Activated naive CD4-positive, alpha-beta T cell treated with anti-CD3 and anti-CD28 coated beads, Interleukin-2, amount 10 ng/mL, durations not matched to agents 7 days and 5 days (primary cell): ENCODE measurements at regions of chr14 and their contacts with region 1.

Region 1: DNA sequence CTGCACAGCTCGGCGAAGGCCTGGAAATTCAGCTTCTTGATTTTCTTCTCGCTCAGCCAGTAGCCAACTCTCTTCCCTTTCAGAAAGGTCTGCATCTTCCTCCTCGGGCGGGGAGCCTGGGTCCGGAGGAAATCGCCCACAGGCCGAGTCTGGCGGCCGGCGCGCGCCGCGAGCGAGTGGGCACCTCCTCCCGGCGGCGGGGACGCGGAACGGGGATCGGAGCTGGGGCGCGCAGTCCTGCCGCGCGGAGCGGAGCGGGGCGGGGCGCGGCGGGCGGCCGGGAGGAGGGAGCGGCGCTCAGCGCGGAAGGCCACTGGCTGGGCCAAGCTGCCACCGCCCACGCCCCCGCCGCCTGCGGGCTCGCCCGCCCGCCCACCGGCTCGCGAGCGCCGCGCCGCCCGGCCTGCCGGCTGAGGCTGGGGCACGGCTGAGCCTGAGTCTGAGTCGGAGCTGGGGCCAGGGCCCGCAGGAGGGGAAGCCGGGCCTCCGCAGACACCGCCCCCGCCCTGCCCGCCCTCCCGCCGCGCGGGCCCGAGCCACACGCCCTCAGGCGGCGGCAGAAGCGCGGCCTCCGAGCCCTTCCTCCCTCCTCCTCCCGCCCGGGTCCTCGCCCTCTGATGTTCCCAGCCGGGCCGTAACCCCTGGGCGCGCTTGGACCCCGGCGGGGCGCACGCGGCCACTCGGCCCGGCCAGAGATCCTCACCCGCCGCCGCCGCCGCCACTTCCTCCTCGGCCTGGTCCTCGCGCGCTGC is 480 bp downstream of the ITPK1 start:
- DNase-seq: peak; percentile 88
- H3K4me3 Mint-ChIP-seq: peak overlapping the region; percentile 86
- H3K27ac Mint-ChIP-seq: peak overlapping the region; percentile 77
- H3K4me1 Mint-ChIP-seq: peaks cover 43% of the 10 kb centered on the region
- H3K27me3 Mint-ChIP-seq: peaks cover 6% of the 10 kb centered on the region

Region 2: DNA sequence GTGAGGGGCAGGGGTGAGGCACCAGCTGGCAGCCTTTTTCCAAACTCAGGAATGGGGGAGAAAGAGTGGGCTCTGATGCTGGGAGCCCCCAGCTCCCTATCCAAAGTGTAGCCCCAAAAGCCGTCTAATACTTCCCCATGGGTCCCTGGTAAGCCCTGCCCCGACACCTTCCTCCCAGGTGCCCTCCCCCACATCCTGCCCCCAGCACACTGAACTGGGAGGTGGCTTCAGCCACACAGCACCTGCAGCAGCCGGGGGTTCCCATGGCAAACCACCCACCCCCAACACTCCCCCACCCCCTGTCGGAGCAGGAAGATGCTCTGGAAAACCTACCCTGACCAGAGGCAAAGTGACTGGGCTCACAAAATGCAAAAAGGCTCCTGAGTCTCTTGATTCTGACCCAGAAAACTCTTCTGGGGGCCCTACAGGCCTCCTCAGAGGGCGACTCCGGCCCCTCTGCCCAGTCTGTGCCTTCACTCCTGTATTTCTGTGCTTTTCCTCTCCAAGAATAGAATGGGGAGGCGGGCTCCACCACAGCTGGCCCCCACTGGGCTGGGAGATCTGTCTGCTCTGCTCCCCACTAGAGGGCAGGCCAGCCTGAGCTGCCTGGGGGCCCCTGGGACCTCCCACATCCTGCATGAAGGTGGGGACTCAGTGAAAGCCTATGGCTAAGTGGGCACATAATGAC is 81.1 kb before region 1 on chr14:
- CTCF ChIA-PET with region 1: interaction called, 12 read pairs
- DNase-seq: peak; percentile 71
- H3K4me3 Mint-ChIP-seq: no peak overlapping the region
- H3K27ac Mint-ChIP-seq: peak overlapping the region; percentile 86
- H3K4me1 Mint-ChIP-seq: peaks cover 29% of the 10 kb centered on the region
- H3K27me3 Mint-ChIP-seq: no peaks in the 10 kb centered on the region

Region 3: DNA sequence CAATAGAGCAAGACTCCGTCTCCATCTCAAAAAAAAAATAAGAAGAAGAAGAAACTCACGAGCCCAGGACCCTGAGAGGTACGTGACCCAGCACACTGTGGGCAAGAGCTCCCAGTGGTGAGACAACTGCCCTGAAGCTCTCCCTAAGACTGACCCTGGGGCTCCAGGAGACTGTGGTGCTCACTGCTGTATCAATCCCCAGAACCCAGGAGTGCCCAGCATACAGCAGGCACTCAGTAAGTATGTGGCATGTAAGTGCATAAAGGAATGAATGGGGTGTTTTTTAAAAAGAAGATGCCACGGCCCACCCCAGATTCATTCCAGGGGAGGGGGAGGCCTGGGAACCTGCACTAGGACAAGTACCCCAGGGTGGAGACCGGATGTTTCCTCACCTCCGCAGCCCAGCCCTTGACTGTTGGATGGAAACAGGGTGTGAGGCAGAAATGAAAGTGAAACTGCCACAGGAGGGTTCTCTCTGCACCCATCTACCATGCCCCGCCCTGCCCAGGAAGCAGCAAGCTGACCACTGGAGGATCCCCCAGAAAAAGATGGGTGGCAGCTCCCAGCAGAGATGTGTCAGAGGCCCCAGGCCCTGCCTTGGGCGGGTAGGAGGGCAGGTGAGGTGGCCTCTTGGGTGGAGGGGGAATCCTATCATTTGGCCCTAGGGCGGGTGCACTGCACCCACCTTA is 11.7 kb before region 1 on chr14:
- CTCF ChIA-PET with region 1: interaction called, 21 read pairs
- DNase-seq: peak; percentile 91
- H3K4me3 Mint-ChIP-seq: peak overlapping the region; percentile 70
- H3K27ac Mint-ChIP-seq: peak overlapping the region; percentile 97
- H3K4me1 Mint-ChIP-seq: peaks cover 65% of the 10 kb centered on the region
- H3K27me3 Mint-ChIP-seq: no peaks in the 10 kb centered on the region

Region 4: DNA sequence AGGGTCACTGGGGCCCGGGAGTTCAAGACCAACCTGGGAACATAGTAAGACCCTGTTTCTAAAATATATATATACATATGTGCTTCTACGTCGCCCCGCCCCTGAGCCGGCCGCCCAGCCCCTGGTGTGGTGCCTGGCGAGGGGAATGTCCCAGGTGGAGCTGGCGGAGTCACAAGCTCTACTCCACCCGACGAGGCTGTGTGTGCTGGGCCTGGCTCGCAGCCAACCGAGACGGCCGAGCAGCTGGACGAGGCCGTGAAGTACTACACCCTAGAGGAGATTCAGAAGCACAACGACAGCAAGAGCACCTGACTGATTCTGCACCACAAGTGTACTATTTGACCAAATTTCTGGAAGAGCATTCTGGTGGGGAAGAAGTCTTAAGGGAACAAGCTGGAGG is 22.6 kb after region 1 on chr14:
- CTCF ChIA-PET with region 1: interaction called, 85 read pairs
- DNase-seq: no peak
- H3K4me3 Mint-ChIP-seq: no peak overlapping the region
- H3K27ac Mint-ChIP-seq: no peak overlapping the region
- H3K4me1 Mint-ChIP-seq: peaks cover 2% of the 10 kb centered on the region
- H3K27me3 Mint-ChIP-seq: peaks cover 12% of the 10 kb centered on the region

Region 5: GRCh38 chr14:93219103-93219726 is 104.0 kb after region 1 on chr14:
- CTCF ChIA-PET with region 1: interaction called, 14 read pairs
- DNase-seq: peak; percentile 69
- H3K4me3 Mint-ChIP-seq: no peak overlapping the region
- H3K27ac Mint-ChIP-seq: no peak overlapping the region
- H3K4me1 Mint-ChIP-seq: no peaks in the 10 kb centered on the region
- H3K27me3 Mint-ChIP-seq: no peaks in the 10 kb centered on the region